Aorta (tissue), 5 donors: ENCODE measurements at regions of chr1 and their contacts with region 1.

Region 1: DNA sequence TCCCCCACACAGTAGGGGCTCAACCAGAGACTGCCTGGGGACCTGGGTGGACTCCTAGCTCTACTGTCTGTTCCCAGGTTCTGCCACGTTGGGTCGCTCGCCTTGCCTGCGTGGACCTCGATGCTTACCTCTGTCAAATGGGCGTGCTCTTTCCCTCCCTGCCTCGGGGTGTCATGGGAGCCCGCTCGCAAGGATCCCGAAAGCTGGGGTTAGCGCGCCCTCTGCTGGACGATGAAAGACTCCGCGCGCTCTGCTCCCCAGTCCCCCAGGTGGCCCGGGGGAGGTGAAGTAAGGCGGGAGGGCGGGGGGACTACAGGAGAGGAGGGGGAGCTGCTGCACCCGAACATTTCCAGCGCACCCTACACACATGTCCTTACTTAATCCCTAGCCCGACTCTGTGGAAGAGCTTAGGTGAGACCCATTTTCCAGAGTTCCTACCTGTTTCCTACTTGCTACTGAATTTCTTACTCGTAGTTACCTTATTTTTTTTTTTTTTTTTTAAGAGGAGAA is 2.3 kb upstream of the BSND start:
- DNase-seq: peak; percentile 83 to 95
- ATAC-seq: peak; percentile 88
- H3K4me3 ChIP-seq: no peak overlapping the region
- H3K27ac ChIP-seq: no peak overlapping the region
- H3K4me1 ChIP-seq: no peaks in the 10 kb centered on the region
- H3K27me3 ChIP-seq: no peaks in the 10 kb centered on the region

Region 2: GRCh38 chr1:54028306-54029251 is 967.8 kb before region 1 on chr1:
- intact Hi-C with region 1: no loop called
- DNase-seq: no peak
- ATAC-seq: no peak
- H3K4me3 ChIP-seq: no peak overlapping the region
- H3K27ac ChIP-seq: no peak overlapping the region
- H3K4me1 ChIP-seq: no peaks in the 10 kb centered on the region
- H3K27me3 ChIP-seq: no peaks in the 10 kb centered on the region

Region 3: GRCh38 chr1:54850737-54851136 is 145.7 kb before region 1 on chr1:
- intact Hi-C with region 1: no loop called
- DNase-seq: peak in 1 of 2 donors; percentile 61
- ATAC-seq: peak; percentile 55
- H3K4me3 ChIP-seq: no peak overlapping the region
- H3K27ac ChIP-seq: no peak overlapping the region
- H3K4me1 ChIP-seq: no peaks in the 10 kb centered on the region
- H3K27me3 ChIP-seq: no peaks in the 10 kb centered on the region

Region 4: GRCh38 chr1:54944610-54945544 is 51.5 kb before region 1 on chr1:
- intact Hi-C with region 1: loop called (anchors 1 kb)
- DNase-seq: peak; percentile 81 to 87
- ATAC-seq: peak; percentile 76
- H3K4me3 ChIP-seq: no peak overlapping the region
- H3K27ac ChIP-seq: no peak overlapping the region
- H3K4me1 ChIP-seq: no peaks in the 10 kb centered on the region
- H3K27me3 ChIP-seq: no peaks in the 10 kb centered on the region

Region 5: GRCh38 chr1:54950369-54951163 is 45.8 kb before region 1 on chr1:
- intact Hi-C with region 1: loop called (anchors 1 kb)
- DNase-seq: peak; percentile 75 to 84
- ATAC-seq: peak; percentile 92
- H3K4me3 ChIP-seq: no peak overlapping the region
- H3K27ac ChIP-seq: peak overlapping the region in 1 of 2 donors; percentile 64
- H3K4me1 ChIP-seq: no peaks in the 10 kb centered on the region
- H3K27me3 ChIP-seq: no peaks in the 10 kb centered on the region